OCI-LY7 (cell line): ENCODE measurements at regions of chr10 and their contacts with region 1.

Region 1: DNA sequence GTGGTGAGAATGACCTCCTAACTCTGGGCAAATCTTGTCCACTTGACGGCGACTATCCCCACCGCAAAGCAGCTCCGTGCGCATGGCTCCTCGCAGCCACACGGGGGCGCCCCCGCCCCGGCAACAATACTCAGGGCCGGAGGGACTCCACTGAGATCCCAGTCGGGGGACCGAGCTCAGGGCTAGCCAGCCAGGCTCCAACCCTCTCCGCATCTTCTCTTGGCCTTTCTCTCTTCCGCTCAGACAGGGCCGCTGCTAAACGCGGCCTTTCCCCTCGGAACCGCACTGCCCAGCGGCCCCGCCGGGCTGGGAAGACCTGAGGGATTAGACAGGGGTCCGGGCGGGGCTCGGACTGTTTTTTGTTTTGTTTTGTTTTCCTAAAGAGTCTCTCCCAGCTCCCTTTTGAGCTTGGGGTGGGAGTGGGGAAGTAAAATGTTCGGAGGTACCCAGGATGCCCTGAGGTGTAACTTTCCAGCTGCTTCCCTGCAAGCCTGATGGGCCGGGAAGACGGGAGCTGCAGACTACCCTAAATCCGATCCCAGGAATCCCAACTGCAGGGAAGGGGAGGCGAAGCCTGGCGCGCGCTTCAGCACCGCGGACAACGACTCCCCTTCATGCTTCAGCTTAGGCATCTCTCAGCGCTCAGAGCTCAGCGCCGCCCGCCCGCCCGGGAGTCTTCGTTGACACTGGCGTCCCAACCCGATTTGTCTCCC is 2.7 kb downstream of the KCNIP2 start:
- DNase-seq: peak; percentile 75
- H3K4me3 ChIP-seq: no peak overlapping the region
- H3K27ac ChIP-seq: no peak overlapping the region
- H3K4me1 ChIP-seq: peaks cover 15% of the 10 kb centered on the region
- CTCF ChIP-seq: peak; percentile 96

Region 2: DNA sequence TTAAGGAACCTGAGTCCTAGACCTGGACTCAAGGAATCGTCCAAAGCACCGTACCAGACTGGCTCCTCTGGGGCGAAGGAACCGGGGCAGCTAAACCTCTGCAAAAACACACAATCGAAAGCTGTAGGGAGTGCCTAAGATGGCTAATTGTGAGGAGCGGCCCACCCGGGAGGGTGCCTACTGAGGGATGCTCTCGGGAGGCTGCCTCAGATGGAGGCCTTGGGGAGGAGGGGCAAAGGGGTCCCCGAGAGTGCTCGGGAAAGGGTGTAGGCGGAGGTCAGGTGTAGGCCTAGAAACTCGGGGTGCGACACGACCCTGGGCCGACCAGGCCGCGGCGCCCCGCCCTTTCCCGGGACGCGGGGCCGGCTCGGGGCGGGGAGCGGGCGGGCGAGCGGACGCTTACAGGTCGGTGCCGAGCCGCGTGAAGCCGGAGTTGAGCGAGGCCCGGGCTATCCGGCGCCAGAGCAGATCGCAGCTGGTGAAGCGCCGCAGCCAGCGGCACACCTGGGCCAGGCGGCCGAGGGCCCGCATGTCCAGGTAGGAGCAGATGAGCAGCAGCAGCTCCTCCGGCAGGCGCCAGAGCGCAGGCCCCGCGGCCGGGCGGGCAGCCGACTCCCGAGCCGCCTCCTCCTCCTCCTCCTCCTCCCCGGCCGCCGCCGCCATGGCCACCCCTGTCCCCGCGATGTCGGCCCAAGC is 146.8 kb before region 1 on chr10:
- CTCF ChIA-PET with region 1: no interaction called
- POLR2A ChIA-PET with region 1: no interaction called
- intact Hi-C with region 1: no loop called
- DNase-seq: peak; percentile 78
- H3K4me3 ChIP-seq: peak overlapping the region; percentile 81
- H3K27ac ChIP-seq: peak overlapping the region; percentile 75
- H3K4me1 ChIP-seq: peaks cover 28% of the 10 kb centered on the region
- CTCF ChIP-seq: no peak

Region 3: GRCh38 chr10:101807158-101807557 is 33.7 kb before region 1 on chr10:
- CTCF ChIA-PET with region 1: no interaction called
- POLR2A ChIA-PET with region 1: no interaction called
- intact Hi-C with region 1: no loop called
- DNase-seq: no peak
- H3K4me3 ChIP-seq: no peak overlapping the region
- H3K27ac ChIP-seq: no peak overlapping the region
- H3K4me1 ChIP-seq: no peaks in the 10 kb centered on the region
- CTCF ChIP-seq: no peak

Region 4: GRCh38 chr10:101889256-101890210 is 48.6 kb after region 1 on chr10:
- CTCF ChIA-PET with region 1: no interaction called
- POLR2A ChIA-PET with region 1: no interaction called
- intact Hi-C with region 1: loop called (anchors 1 kb)
- DNase-seq: peak; percentile 79
- H3K4me3 ChIP-seq: no peak overlapping the region
- H3K27ac ChIP-seq: no peak overlapping the region
- H3K4me1 ChIP-seq: no peaks in the 10 kb centered on the region
- CTCF ChIP-seq: peak; percentile 99